ENCODE measurements at regions of chr19 and their contacts with region 1.

Region 1: DNA sequence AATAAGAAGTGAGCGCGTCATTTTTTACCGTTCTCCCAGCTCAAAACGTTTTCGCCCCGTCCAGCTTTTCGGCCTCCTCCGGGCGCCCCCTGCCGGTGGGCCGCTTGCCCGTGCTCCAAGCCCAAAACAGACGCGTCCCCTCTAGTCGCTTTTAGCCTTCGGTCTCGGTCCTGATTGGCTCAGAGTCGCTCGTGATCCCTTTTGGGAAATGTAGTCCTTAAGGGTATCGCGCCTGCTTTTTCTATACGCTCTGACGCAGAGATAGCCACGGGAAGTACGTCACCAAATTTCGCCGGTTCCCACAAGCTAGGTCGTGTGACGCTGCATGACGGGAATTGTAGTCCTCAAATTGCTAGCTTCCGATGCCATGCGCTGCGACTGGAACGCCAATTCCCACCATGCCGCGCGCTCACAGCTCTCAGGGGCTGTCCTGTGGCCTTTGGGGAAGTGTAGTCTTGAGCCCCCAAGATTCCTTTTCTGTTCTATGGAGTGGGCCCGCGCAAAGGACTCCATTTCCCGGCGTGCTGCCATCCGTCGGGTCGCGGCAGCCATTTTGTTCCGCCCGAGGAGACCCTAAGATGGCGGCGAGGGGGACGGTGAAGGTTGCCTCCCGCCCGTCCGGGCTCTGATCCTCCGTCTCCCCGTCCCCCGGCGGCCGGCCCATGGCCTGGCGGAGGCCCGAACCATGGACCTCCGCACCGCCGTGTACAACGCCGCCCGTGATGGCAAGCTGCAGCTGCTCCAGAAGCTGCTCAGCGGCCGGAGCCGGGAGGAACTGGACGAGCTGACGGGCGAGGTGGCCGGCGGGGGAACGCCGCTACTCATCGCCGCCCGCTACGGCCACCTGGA is at the start of gene FEM1A:
- DNase-seq: peak; percentile 99
- ATAC-seq: peak; percentile 98
- H3K4me3 ChIP-seq: peak within 1 kb of the TSS; percentile 68 to 69
- H3K27ac ChIP-seq: peak within 1 kb of the TSS; percentile 77
- H3K4me1 ChIP-seq: peaks cover 11% of the 10 kb centered on the region
- H3K27me3 ChIP-seq: no peaks in the 10 kb centered on the region
- CTCF ChIP-seq: peak; percentile 96
- total RNA-seq, gene FEM1A: 13.4 TPM

Region 2: DNA sequence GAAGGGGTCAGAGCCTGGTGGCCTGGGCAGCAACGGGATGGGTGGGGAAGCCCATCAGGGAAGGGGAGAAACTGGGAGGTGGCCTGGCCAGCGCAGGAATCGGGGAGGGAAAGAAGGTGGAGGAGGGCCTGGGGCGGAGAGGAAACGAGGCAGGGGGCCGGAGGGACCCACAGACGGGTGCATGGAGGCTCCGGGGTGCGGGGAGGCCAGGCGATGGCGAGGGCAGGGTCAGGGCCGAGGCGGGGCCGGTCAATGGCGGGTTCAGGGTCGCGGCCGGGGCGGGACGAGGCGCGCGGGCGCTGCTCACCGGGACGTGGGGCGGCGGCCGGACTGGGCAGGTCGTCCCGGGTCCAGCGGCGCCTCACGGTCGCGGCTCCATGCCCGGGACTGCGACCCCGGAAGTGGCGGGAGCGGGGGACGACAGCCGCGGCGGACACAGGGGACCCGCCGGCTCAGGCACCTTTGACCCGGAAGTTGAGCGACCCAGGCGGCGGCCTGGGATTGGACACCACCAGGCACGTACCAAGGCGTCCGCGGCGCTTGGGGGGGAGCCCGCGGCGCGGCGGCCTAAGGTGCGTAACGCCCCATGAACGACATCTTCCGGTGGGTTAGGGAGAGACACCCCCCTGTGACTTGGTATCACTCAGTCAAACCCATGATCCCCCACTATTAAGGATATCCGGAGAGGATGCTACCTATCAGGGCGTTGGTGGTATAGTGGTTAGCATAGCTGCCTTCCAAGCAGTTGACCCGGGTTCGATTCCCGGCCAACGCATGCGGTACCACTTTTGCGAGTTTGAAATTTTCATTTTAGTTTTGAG is 67.8 kb before region 1 on chr19 and contains the start of gene DPP9:
- CTCF ChIA-PET with region 1: interaction called, 11 read pairs
- POLR2A ChIA-PET with region 1: interaction called, 3 read pairs
- in situ Hi-C with region 1: no loop called
- intact Hi-C with region 1: no loop called
- DNase-seq: peak; percentile 96
- ATAC-seq: peak; percentile 93
- H3K4me3 ChIP-seq: peak within 1 kb of the TSS; percentile 88 to 97
- H3K27ac ChIP-seq: peak within 1 kb of the TSS; percentile 94
- H3K4me1 ChIP-seq: peaks cover 30% of the 10 kb centered on the region
- H3K27me3 ChIP-seq: no peaks in the 10 kb centered on the region
- CTCF ChIP-seq: no peak
- total RNA-seq, gene DPP9: 108 TPM

Region 3: GRCh38 chr19:4732680-4733114 is 58.7 kb before region 1 on chr19:
- CTCF ChIA-PET with region 1: interaction called, 33 read pairs
- POLR2A ChIA-PET with region 1: interaction called, 3 read pairs
- in situ Hi-C with region 1: no loop called
- intact Hi-C with region 1: loop called (anchors 2 kb)
- DNase-seq: peak; percentile 35
- ATAC-seq: peak; percentile 91
- H3K4me3 ChIP-seq: peak overlapping the region in 1 of 2 experiments; percentile 23; a peak in 1 of 4 replicates
- H3K27ac ChIP-seq: no peak overlapping the region
- H3K4me1 ChIP-seq: no peaks in the 10 kb centered on the region
- H3K27me3 ChIP-seq: no peaks in the 10 kb centered on the region
- CTCF ChIP-seq: peak; percentile 87

Region 4: GRCh38 chr19:4768934-4769777 is 22.2 kb before region 1 on chr19:
- CTCF ChIA-PET with region 1: interaction called, 10 read pairs
- POLR2A ChIA-PET with region 1: no interaction called
- in situ Hi-C with region 1: no loop called
- intact Hi-C with region 1: no loop called
- DNase-seq: no peak
- ATAC-seq: no peak; the same call in 1 of the 2 replicates
- H3K4me3 ChIP-seq: no peak overlapping the region
- H3K27ac ChIP-seq: no peak overlapping the region
- H3K4me1 ChIP-seq: no peaks in the 10 kb centered on the region
- H3K27me3 ChIP-seq: no peaks in the 10 kb centered on the region; the same call in 1 of the 2 replicates
- CTCF ChIP-seq: no peak

Region 5: GRCh38 chr19:4851551-4852290 is 60.3 kb after region 1 on chr19:
- CTCF ChIA-PET with region 1: no interaction called
- POLR2A ChIA-PET with region 1: interaction called, 14 read pairs
- in situ Hi-C with region 1: no loop called
- intact Hi-C with region 1: no loop called
- DNase-seq: no peak
- ATAC-seq: peak; percentile 87
- H3K4me3 ChIP-seq: no peak overlapping the region
- H3K27ac ChIP-seq: no peak overlapping the region
- H3K4me1 ChIP-seq: no peaks in the 10 kb centered on the region
- H3K27me3 ChIP-seq: no peaks in the 10 kb centered on the region
- CTCF ChIP-seq: peak; percentile 86

Region 6: GRCh38 chr19:5445071-5446062 is 654.0 kb after region 1 on chr19:
- CTCF ChIA-PET with region 1: interaction called, 11 read pairs
- POLR2A ChIA-PET with region 1: no interaction called
- in situ Hi-C with region 1: no loop called
- intact Hi-C with region 1: no loop called
- DNase-seq: no peak
- ATAC-seq: no peak
- H3K4me3 ChIP-seq: no peak overlapping the region
- H3K27ac ChIP-seq: no peak overlapping the region
- H3K4me1 ChIP-seq: no peaks in the 10 kb centered on the region
- H3K27me3 ChIP-seq: no peaks in the 10 kb centered on the region
- CTCF ChIP-seq: no peak